ENCODE measurements at regions of chr6 and their contacts with region 1.

Region 1: GRCh38 chr6:53651764-53652401 is 13.7 kb downstream of the KLHL31 start:
- DNase-seq: peak; percentile 89
- H3K4me3 Mint-ChIP-seq: peak overlapping the region; percentile 100
- H3K27ac Mint-ChIP-seq: peak overlapping the region; percentile 95
- H3K4me1 Mint-ChIP-seq: peaks cover 23% of the 10 kb centered on the region
- H3K27me3 Mint-ChIP-seq: no peaks in the 10 kb centered on the region
- CTCF ChIP-seq: no peak

Region 2: GRCh38 chr6:53492860-53493634 is 158.8 kb before region 1 on chr6:
- CTCF ChIA-PET with region 1: interaction called, 24 read pairs
- intact Hi-C with region 1: loop called (anchors 1 kb)
- DNase-seq: no peak
- H3K4me3 Mint-ChIP-seq: peak overlapping the region; percentile 30
- H3K27ac Mint-ChIP-seq: no peak overlapping the region
- H3K4me1 Mint-ChIP-seq: peaks cover 19% of the 10 kb centered on the region
- H3K27me3 Mint-ChIP-seq: no peaks in the 10 kb centered on the region
- CTCF ChIP-seq: peak; percentile 22

Region 3: GRCh38 chr6:53544470-53545308 is 107.2 kb before region 1 on chr6 and contains the start of gene GCLC:
- CTCF ChIA-PET with region 1: interaction called, 13 read pairs
- intact Hi-C with region 1: loop called (anchors 1 kb)
- DNase-seq: peak; percentile 94
- H3K4me3 Mint-ChIP-seq: peak within 1 kb of the TSS; percentile 90
- H3K27ac Mint-ChIP-seq: peak within 1 kb of the TSS; percentile 93
- H3K4me1 Mint-ChIP-seq: peaks cover 12% of the 10 kb centered on the region
- H3K27me3 Mint-ChIP-seq: no peaks in the 10 kb centered on the region
- CTCF ChIP-seq: peak; percentile 77
- total RNA-seq, gene GCLC: 45.7 and 45.9 TPM in 2 replicates

Region 4: GRCh38 chr6:53718597-53719460 is 66.9 kb after region 1 on chr6:
- CTCF ChIA-PET with region 1: interaction called, 11 read pairs
- intact Hi-C with region 1: loop called (anchors 5 kb)
- DNase-seq: peak; percentile 51
- H3K4me3 Mint-ChIP-seq: no peak overlapping the region
- H3K27ac Mint-ChIP-seq: peak overlapping the region; percentile 70
- H3K4me1 Mint-ChIP-seq: peaks cover 64% of the 10 kb centered on the region
- H3K27me3 Mint-ChIP-seq: no peaks in the 10 kb centered on the region
- CTCF ChIP-seq: peak; percentile 55

Region 5: DNA sequence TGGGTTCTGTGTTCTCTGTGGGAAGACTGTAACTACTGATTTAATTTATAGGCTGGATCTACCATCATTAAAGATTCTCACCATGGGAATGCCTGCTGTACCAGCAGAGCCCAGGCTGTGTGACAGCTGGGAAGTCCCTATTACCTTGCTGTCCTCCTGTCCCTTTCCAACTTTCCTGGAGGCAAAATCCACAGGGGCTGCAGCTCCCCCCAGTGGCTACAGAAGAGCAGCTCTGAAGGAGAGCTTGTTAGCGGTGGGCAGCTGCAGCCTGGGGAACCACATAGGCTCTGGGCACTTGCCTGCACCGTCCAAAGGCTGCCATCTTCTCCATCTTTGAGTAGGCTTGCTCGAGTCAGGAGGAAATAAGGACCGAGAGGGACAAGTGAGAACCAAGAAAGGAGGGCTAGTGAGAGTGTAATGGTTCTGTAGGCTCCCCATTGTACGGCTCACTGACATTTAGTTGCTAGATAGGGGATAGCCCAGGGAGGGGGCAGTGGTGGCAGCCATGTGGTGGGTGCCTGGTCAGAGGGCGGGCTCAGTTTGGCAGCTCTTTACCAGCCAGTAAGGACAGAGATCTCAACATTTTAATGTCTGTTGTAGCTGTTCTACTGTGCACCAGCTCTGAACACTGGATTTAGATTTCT is 304.3 kb after region 1 on chr6:
- CTCF ChIA-PET with region 1: interaction called, 4 read pairs
- intact Hi-C with region 1: loop called (anchors 2 kb)
- DNase-seq: peak; percentile 86
- H3K4me3 Mint-ChIP-seq: no peak overlapping the region
- H3K27ac Mint-ChIP-seq: no peak overlapping the region
- H3K4me1 Mint-ChIP-seq: peaks cover 14% of the 10 kb centered on the region
- H3K27me3 Mint-ChIP-seq: no peaks in the 10 kb centered on the region
- CTCF ChIP-seq: peak; percentile 89

Measured in Calu3 (cell line).